ENCODE measurements at regions of chr16 and their contacts with region 1.

Region 1: GRCh38 chr16:25366078-25366477 is 108.4 kb upstream of the ZKSCAN2 start:
- DNase-seq: no peak
- H3K4me3 ChIP-seq: no peak overlapping the region
- H3K27ac ChIP-seq: no peak overlapping the region
- H3K4me1 ChIP-seq: no peaks in the 10 kb centered on the region
- H3K27me3 ChIP-seq: no peaks in the 10 kb centered on the region
- CTCF ChIP-seq: no peak
- POLR2A ChIP-seq: no peak

Region 2: DNA sequence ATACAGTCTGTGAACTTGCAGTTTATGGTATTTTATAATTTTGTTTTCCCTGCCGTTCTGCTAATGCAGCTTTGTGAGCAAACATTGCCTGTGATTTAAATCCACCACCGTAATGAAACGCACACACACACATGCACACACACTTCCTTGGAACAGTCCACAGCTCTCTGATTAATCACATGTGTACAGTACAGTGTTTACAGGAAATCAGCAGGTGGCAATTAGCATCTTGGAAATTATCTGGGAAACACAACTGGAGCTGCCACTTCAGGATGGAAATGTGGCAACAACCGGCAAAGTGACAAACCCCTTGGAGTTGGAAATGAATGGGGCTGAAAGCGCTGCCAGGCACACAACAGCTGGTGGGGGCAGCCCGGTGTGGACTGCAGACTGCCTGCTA is 95.5 kb before region 1 on chr16:
- intact Hi-C with region 1: no loop called
- DNase-seq: no peak
- H3K4me3 ChIP-seq: no peak overlapping the region
- H3K27ac ChIP-seq: no peak overlapping the region
- H3K4me1 ChIP-seq: no peaks in the 10 kb centered on the region
- H3K27me3 ChIP-seq: no peaks in the 10 kb centered on the region
- CTCF ChIP-seq: no peak
- POLR2A ChIP-seq: no peak

Region 3: GRCh38 chr16:25841761-25842160 is 475.7 kb after region 1 on chr16:
- intact Hi-C with region 1: loop called (anchors 5 kb)
- DNase-seq: no peak
- H3K4me3 ChIP-seq: no peak overlapping the region
- H3K27ac ChIP-seq: no peak overlapping the region
- H3K4me1 ChIP-seq: peaks cover 0 to 3% of the 10 kb centered on the region in 2 donors
- H3K27me3 ChIP-seq: no peaks in the 10 kb centered on the region
- CTCF ChIP-seq: no peak
- POLR2A ChIP-seq: no peak

Region 4: GRCh38 chr16:27066668-27067537 is 1700.8 kb after region 1 on chr16 and contains the start of gene C16orf82:
- intact Hi-C with region 1: no loop called
- DNase-seq: no peak
- H3K4me3 ChIP-seq: peak within 1 kb of the TSS in 1 of 3 donors; percentile 41
- H3K27ac ChIP-seq: no peak within 1 kb of the TSS
- H3K4me1 ChIP-seq: no peaks in the 10 kb centered on the region
- H3K27me3 ChIP-seq: no peaks in the 10 kb centered on the region
- CTCF ChIP-seq: no peak
- POLR2A ChIP-seq: no peak
- total RNA-seq, gene C16orf82: 0.16 TPM in 1 of 3 donors, not detected in the others